ENCODE measurements at regions of chr17 and their contacts with region 1.

Region 1: DNA sequence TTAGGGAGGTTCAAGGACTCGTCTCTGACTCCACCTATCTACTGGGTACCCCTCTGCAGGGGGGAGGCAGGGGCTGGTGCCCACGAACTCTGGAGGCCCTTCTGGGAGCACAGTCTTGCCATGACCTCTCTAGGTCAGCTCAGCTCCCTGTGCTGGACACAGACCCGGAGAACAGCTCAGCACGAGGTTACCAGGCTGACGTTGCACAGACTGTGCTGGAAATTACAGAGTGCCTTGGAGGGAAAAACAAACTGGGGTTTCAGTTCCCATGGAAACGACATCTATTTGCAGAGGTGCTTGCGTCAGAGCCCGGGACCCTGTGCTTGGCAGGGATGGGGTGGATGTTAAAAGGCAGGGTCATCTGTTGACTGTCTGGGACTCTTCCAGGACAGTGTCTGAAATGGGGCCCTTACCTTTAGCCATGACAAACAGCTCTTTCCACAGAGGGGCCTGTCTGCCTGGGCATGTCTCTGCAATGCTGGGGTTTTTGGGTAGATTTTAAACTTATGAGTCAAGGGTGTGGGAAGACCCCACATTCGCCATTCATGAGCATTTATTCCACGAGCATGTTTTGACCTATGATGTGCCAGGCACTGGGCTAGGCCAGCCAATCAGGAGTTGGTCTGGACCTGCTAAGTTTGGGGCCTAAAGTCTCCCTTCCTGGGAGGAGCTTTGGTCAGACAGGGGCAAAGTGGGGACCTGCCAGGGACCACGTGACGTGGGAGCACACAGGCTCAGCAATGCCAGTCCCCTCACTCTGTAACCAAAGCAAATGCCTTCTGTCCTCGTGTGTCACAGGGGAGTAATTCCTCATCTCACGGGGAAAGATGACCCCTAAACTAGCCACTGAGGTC is 22.5 kb downstream of the CCR7 start:
- DNase-seq: peak; percentile 98
- H3K4me3 ChIP-seq: no peak overlapping the region
- H3K27ac ChIP-seq: peak overlapping the region; percentile 94
- H3K27me3 ChIP-seq: no peaks in the 10 kb centered on the region
- CTCF ChIP-seq: no peak

Region 2: GRCh38 chr17:40317880-40318829 is 224.6 kb before region 1 on chr17:
- in situ Hi-C with region 1: loop called (anchors 25 kb)
- DNase-seq: peak; percentile 94
- H3K4me3 ChIP-seq: peak overlapping the region; percentile 89
- H3K27ac ChIP-seq: peak overlapping the region; percentile 89
- H3K27me3 ChIP-seq: no peaks in the 10 kb centered on the region
- CTCF ChIP-seq: no peak

Region 3: DNA sequence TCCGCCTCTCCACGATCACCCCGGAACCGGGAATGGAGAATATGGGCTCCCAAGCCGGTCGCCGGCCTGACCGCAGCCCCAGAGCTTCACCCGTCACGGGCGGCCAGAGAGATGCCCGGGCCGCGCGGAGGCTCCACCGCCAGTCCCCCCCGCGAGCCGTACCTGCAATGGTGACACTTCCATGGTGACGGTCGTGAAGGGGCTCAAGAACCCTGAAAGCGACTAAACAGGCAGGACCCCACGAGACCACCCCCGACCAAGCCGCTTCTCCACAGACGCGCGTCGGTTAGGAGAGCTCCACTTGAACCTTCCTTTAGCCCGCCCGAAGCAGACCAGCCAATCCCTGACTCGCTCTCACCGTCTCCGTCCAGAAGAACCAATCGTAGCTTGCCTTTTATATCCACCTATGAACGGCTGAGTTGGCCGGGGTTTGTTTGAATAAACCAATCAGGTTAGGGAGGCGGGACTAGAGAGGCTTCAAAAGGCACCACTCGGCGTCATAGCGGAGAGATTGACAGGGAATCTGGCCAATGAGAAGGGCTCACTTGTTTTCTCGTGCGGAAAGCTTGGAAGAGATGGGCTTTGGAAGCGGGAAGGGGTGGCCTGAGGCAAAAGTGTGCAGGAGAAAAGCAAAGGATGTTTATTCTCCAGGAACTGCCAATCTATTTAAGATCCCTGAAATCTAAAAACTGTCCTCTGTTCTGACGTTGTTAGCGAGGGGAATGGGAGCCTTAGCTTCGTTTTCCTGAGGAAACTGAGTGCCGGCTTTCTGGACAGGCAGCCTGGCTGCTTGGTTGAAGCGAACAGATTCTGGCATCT is 125.0 kb before region 1 on chr17 and contains the start of gene TOP2A:
- in situ Hi-C with region 1: loop called (anchors 25 kb)
- DNase-seq: peak; percentile 100
- H3K4me3 ChIP-seq: peak within 1 kb of the TSS; percentile 95
- H3K27ac ChIP-seq: peak within 1 kb of the TSS; percentile 38
- H3K27me3 ChIP-seq: no peaks in the 10 kb centered on the region
- CTCF ChIP-seq: no peak

Region 4: DNA sequence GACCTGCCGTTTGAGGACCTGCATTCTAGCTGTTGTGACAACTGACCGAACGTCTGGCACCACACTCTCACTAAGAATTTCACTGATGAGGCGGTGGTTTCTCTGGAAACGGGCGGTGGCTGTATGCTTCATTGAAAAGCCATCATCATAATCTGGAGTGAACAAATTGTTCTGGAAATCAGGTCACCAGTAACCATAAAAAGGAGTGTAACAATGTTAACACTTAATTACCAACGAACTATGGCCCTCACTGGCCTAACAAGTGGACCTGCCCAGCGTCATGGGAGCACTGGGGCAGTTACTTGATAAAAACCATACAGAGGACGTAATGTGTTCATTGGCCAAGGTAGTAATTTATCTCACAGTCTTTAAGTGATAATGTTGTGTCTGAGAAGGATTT is 89.4 kb after region 1 on chr17:
- in situ Hi-C with region 1: no loop called
- DNase-seq: no peak
- H3K4me3 ChIP-seq: no peak overlapping the region
- H3K27ac ChIP-seq: no peak overlapping the region
- H3K27me3 ChIP-seq: no peaks in the 10 kb centered on the region
- CTCF ChIP-seq: no peak

Measured in brain microvascular endothelial cell (primary cell).